Panc1 (cell line): ENCODE measurements at regions of chr4 and their contacts with region 1.

Region 1: DNA sequence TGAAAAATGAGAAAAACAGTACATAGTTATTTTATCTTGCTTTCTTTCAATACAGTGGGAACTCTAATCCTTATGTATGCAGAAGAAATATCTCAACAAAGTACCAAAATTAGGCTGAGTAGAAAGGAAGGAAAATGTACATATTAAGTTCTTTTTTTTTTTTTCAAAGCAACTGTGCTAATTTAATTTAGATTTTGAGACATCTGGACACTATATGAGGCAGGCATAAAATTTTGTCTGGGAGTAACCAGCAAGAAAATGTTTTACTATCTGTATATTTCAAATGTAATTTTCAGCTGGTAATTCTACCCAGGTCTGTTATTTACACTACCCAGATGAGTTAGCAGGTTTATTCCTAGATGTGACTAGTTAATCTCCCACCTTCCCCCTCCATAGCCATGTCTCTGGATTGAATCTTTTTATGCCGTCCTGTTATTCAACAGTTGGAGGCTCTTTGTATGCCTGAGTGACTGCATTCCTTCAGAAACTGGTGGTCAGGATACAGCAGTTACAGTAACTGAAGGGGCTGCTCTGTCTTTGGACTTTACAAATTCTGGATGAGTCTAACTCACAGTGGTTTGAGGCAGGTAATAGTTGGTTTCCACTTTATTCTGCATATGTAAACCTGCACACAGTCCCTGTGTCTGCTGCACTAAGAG is 633.6 kb downstream of the PCDH18 start:
- DNase-seq: no peak
- ATAC-seq: no peak
- H3K4me3 ChIP-seq: no peak overlapping the region
- H3K27ac ChIP-seq: no peak overlapping the region
- H3K4me1 ChIP-seq: no peaks in the 10 kb centered on the region
- H3K27me3 ChIP-seq: no peaks in the 10 kb centered on the region
- CTCF ChIP-seq: no peak

Region 2: DNA sequence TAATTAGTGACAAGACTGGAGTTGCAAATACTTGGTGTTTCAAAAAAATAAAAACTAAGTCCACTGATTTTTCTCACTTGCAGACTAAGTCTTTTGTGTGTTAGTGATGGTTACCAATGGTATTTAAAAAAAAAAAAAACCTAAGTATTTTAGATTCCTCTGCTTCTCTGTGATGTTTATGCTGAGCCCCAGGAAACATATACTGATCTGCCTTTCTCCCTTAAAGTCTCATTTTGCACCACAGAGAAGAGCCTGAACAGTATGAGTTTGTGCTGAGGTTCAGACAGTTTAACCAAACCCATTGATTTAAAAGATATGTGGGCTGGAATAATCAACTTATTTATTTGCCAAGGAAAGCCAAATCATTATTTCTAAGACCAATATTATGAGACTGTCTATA is 671.4 kb before region 1 on chr4:
- CTCF ChIA-PET with region 1: no interaction called
- POLR2A ChIA-PET with region 1: no interaction called
- in situ Hi-C with region 1: no loop called
- intact Hi-C with region 1: no loop called
- DNase-seq: no peak
- ATAC-seq: no peak
- H3K4me3 ChIP-seq: no peak overlapping the region
- H3K27ac ChIP-seq: no peak overlapping the region
- H3K4me1 ChIP-seq: no peaks in the 10 kb centered on the region
- H3K27me3 ChIP-seq: no peaks in the 10 kb centered on the region
- CTCF ChIP-seq: no peak

Region 3: DNA sequence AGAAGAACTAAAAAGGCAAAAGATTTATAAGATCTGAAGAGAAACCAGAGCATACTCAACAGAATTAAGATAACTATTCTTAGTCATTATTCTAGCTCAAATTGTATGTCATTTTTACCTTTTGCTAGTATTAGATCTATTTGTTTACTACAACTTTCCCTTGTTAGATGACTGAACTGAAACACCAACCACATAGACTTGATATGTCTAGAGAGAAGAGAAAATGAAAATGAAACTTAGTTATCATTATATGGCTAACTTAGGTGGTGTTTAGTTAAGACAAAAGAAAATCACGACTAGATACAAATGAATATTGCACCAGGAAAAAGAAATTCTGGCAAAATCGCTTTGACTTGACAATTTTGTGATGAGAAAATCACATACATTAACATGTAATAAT is 57.2 kb before region 1 on chr4:
- CTCF ChIA-PET with region 1: no interaction called
- POLR2A ChIA-PET with region 1: no interaction called
- in situ Hi-C with region 1: no loop called
- intact Hi-C with region 1: no loop called
- DNase-seq: no peak
- ATAC-seq: no peak
- H3K4me3 ChIP-seq: no peak overlapping the region
- H3K27ac ChIP-seq: no peak overlapping the region
- H3K4me1 ChIP-seq: no peaks in the 10 kb centered on the region
- H3K27me3 ChIP-seq: no peaks in the 10 kb centered on the region
- CTCF ChIP-seq: no peak

Region 4: DNA sequence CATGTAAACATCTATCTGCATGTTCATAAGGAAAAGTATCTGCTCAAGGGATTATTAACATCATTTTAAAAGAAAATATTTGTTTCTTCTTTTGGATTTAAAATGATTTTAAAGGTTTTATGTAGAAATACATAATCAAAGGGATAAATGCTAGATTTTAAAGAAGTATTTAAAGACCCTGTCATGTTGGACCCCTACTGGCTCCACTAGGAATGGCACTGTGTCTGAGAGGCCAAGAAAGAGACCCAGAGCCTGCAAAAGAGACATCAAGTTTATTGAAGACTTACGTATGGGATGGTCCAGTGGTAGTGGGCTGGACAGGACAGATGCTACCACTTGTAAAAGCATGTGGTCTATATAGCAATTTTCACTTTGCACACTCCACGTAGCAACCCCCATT is 712.2 kb after region 1 on chr4:
- CTCF ChIA-PET with region 1: no interaction called
- POLR2A ChIA-PET with region 1: no interaction called
- in situ Hi-C with region 1: no loop called
- intact Hi-C with region 1: loop called (anchors 5 kb)
- DNase-seq: no peak
- ATAC-seq: no peak
- H3K4me3 ChIP-seq: no peak overlapping the region
- H3K27ac ChIP-seq: no peak overlapping the region
- H3K4me1 ChIP-seq: no peaks in the 10 kb centered on the region
- H3K27me3 ChIP-seq: no peaks in the 10 kb centered on the region
- CTCF ChIP-seq: peak; percentile 43